AG04450 (cell line): ENCODE measurements at regions of chr17 and their contacts with region 1.

Region 1: DNA sequence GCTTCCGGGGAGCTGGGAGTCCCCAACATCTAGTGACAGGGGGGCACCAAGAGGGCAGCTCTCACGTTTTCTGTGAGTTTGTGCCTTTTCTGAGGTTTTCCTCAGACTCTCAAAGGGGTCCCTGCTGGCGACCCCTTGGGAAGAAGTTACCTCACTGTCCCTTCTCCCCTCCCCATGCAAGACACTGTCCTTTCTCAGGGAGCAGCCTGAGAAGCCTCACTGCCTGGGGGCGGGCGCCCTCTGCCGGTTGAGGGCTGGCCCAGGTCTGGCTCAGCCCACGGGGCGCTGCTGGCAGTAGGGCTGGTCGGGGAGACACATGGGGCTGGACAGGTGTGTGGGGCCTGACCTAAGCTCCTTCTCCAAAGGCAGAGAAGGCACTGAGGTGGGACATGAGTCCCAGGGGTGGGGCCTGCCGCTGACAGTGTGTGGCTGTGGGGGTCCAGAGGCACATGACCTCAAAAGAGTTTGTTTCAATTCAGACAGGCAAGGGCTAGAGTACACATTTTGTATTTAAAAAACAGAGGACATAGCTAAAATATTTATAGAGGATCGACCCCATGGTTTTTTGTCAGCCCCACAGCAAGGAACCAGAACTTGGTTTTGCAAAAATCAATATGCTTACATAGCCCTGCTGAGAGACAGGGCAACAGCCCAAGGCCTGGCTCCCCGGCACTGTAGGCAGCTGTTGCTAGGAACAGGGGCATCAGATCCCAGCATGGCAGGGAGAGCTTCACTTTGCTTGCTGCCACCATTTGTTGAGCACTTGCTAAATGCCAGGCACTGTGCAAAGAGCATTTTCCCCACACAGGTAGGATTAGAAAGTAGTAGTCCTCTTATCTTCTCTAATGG is 18.5 kb upstream of the ALDH3A1 start:
- DNase-seq: no peak
- H3K4me3 ChIP-seq: no peak overlapping the region
- H3K27ac ChIP-seq: no peak overlapping the region
- H3K27me3 ChIP-seq: peaks cover 10% of the 10 kb centered on the region
- CTCF ChIP-seq: peak; percentile 99

Region 2: DNA sequence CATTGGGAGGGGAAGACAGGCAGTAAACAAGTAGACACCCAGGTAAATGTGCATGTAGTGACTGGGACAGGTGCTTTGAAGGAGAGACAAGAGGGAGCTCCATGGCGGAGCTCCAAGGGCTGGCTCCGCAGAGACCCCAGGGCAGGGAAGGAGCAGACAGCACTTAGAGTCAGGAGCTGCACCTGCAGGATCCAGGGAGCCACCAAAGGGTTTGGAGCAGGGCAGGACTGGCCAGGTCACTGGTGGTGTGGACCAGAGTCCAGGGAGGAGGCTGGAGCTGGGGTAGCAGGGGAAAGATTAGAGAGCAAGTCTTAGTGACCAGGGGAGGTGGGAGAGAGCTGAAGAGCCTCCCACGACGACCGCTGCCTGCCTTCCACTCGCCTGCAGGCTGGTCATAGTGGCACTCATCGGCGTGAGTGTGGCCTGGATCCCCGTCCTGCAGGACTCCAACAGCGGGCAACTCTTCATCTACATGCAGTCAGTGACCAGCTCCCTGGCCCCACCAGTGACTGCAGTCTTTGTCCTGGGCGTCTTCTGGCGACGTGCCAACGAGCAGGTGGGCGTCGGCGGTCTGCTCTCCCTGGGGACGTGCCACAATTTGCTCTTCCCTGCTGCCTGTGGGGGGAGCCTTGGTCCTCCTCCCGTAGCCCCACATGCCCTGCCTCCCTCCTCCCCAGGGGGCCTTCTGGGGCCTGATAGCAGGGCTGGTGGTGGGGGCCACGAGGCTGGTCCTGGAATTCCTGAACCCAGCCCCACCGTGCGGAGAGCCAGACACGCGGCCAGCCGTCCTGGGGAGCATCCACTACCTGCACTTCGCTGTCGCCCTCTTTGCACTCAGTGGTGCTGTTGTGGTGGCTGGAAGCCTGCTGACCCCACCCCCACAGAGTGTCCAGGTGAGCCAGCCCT is 747.4 kb before region 1 on chr17:
- CTCF ChIA-PET with region 1: no interaction called
- POLR2A ChIA-PET with region 1: no interaction called
- DNase-seq: no peak
- H3K4me3 ChIP-seq: no peak overlapping the region
- H3K27ac ChIP-seq: no peak overlapping the region
- H3K27me3 ChIP-seq: no peaks in the 10 kb centered on the region
- CTCF ChIP-seq: no peak

Region 3: DNA sequence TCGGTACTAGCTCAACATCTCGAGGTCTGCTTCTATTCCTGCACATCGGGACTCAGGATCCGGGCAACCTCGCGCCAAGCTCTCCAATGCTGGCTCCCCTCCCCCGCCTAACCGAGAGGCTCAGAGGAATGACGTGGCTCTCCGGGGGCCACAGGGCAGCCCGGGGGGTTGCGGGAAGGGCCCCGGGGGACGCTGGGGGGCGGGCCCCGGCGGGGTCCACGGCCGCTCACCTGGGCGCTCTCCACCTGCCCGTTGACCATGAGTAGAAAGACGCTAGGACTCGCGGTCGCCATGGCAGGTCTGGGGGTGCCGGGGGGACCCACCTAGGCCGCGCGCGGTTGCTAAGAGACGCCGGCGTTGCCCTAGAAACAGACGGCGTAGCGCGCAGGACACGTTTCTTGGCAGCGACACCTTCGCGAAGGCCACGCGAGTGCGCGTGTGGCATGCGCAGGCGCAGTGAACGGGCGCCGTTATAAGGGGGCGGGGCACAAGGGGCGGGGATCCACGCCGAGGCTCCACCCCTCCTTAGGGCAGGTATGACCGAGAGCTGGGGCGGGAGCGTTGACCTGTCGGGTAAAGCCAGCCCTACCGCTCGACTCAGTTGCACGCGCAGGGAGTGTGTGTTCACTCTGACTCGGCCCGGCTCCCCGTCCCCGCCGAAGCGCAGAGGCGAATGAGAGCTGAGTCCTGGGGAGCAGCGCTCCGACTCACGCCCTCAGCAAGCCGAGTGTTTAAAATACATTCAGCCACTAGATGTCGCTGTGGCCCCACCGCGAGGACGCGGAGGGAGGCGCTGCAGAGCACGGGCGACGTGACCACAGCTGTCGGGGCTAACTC is 404.2 kb before region 1 on chr17 and contains the start of gene B9D1:
- CTCF ChIA-PET with region 1: interaction called, 97 read pairs
- POLR2A ChIA-PET with region 1: interaction called, 11 read pairs
- DNase-seq: peak; percentile 84
- H3K4me3 ChIP-seq: peak within 1 kb of the TSS; percentile 87
- H3K27ac ChIP-seq: peak within 1 kb of the TSS; percentile 65
- H3K27me3 ChIP-seq: no peaks in the 10 kb centered on the region
- CTCF ChIP-seq: peak; percentile 84
- polyA plus RNA-seq, gene B9D1: 35.2 and 45.8 TPM in 2 replicates

Region 4: GRCh38 chr17:19531780-19532501 is 234.7 kb before region 1 on chr17:
- CTCF ChIA-PET with region 1: interaction called, 15 read pairs
- POLR2A ChIA-PET with region 1: no interaction called
- DNase-seq: no peak
- H3K4me3 ChIP-seq: no peak overlapping the region
- H3K27ac ChIP-seq: no peak overlapping the region
- H3K27me3 ChIP-seq: peaks cover 47% of the 10 kb centered on the region
- CTCF ChIP-seq: no peak

Region 5: DNA sequence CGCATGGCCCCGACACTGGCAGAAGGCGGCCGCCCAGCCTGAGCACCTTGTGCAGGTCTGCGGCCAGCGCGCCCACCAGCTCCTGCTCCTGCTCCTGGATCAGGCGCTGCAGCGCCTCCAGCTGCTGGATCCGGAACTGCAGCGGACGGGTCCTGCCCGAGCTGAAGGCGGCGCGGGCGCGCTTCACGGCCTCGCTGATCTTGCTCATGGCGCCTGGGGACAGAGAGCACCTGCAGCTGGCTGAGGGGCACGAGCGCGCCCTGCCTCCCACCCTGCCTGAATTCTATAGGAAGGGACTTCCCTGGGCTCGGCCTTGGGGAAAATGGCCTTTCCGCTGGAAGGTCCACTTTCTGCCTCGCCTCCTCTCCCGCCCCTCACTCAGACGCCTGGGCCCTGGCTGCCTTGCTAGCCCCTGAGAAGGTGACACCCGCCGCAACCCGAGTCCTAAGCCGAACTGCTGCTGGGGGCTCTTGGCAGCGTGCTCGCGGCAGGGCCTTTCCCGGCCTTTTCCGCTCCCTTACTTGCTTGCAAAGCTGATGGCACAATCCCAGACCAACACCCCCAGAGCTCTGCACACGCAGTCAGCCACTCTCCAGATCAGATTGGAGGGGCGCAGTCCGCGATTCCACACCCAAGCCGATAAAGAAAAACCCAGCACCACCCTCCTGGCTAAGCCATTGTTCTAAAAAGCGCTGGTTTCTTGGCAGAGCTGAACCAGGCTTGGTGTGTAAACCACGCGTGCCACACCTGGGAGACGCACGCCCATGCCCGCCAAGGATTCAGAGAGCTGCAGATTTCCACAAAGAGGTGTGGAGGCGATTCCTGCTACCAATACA is 21.5 kb before region 1 on chr17:
- CTCF ChIA-PET with region 1: interaction called, 14 read pairs
- POLR2A ChIA-PET with region 1: no interaction called
- DNase-seq: no peak
- H3K4me3 ChIP-seq: peak overlapping the region; percentile 35
- H3K27ac ChIP-seq: no peak overlapping the region
- H3K27me3 ChIP-seq: peaks cover 32% of the 10 kb centered on the region
- CTCF ChIP-seq: peak; percentile 79